ENCODE measurements at regions of chrX and their contacts with region 1.

Region 1: GRCh38 chrX:16807976-16808542 is 21.8 kb downstream of the TXLNG start:
- DNase-seq: peak; percentile 15
- H3K4me3 Mint-ChIP-seq: peak overlapping the region; percentile 36
- H3K27ac Mint-ChIP-seq: no peak overlapping the region
- H3K4me1 Mint-ChIP-seq: peaks cover 15% of the 10 kb centered on the region
- H3K27me3 Mint-ChIP-seq: no peaks in the 10 kb centered on the region
- CTCF ChIP-seq: no peak

Region 2: DNA sequence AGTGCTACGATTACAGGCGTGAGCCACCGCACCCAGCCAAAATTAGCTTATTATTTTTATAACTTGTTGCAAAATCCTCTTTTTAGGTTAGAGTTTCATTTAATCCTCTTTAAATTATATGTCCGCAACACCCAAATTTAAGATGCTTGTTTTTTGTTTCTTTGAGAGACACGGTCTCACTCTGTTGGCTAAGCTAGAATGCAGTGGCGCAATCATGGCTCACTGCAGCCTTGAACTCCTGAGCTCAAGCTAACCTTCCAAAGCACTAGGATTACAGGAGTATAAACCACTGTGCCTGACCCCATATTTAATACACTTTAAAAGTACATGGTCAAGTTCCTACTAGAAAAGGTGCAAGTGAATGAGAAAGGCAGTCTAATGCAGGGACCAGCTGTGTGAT is 59.9 kb after region 1 on chrX:
- CTCF ChIA-PET with region 1: no interaction called
- intact Hi-C with region 1: loop called (anchors 1 kb)
- DNase-seq: no peak
- H3K4me3 Mint-ChIP-seq: peak overlapping the region; percentile 96
- H3K27ac Mint-ChIP-seq: peak overlapping the region; percentile 74
- H3K4me1 Mint-ChIP-seq: peaks cover 23% of the 10 kb centered on the region
- H3K27me3 Mint-ChIP-seq: no peaks in the 10 kb centered on the region
- CTCF ChIP-seq: no peak

Measured in Calu3 (cell line).